ENCODE measurements at regions of chr19 and their contacts with region 1.

Region 1: DNA sequence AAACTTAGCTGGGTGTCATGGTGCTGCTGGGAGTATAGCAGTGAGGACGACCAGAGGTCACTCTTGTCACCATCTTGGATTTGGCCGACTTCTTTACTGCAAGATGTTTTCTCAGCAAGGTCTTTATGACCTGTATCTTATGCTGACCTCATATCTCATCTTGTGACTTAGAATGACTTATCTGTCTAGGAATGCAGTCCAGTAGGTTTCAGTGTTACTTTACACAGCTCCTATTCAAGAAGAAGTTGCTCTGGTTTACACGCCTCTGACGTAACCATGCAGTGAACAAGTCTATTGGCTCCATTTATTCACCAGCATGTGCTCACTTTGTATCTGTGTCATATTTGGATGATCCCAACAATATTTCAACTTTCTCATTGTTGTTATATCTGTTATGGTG is 26.7 kb downstream of the ZNF850 start:
- DNase-seq: no peak
- ATAC-seq: no peak
- H3K4me3 ChIP-seq: no peak overlapping the region
- H3K27ac ChIP-seq: no peak overlapping the region
- H3K4me1 ChIP-seq: no peaks in the 10 kb centered on the region
- H3K27me3 ChIP-seq: no peaks in the 10 kb centered on the region
- CTCF ChIP-seq: no peak

Region 2: GRCh38 chr19:36378625-36379509 is 367.0 kb before region 1 on chr19 and contains the start of gene ZFP14:
- intact Hi-C with region 1: no loop called
- DNase-seq: peak; percentile 93 to 94
- ATAC-seq: peak; percentile 98 to 100 (median 99)
- H3K4me3 ChIP-seq: peak within 1 kb of the TSS; percentile 54 to 86 (median 71)
- H3K27ac ChIP-seq: peak within 1 kb of the TSS; percentile 23 to 92 (median 82)
- H3K4me1 ChIP-seq: peaks cover 7 to 22% (median 11%) of the 10 kb centered on the region in 9 donors
- H3K27me3 ChIP-seq: no peaks in the 10 kb centered on the region
- CTCF ChIP-seq: peak in 6 of 9 donors; percentile 9 to 51 (median 36)
- total RNA-seq, gene ZFP14: 1.0 to 4.0 (median 2.5) TPM

Region 3: GRCh38 chr19:36638862-36639510 is 106.9 kb before region 1 on chr19:
- intact Hi-C with region 1: loop called in 2 of 10 experiments (anchors 10 kb)
- DNase-seq: no peak
- ATAC-seq: no peak
- H3K4me3 ChIP-seq: no peak overlapping the region
- H3K27ac ChIP-seq: no peak overlapping the region
- H3K4me1 ChIP-seq: no peaks in the 10 kb centered on the region
- H3K27me3 ChIP-seq: no peaks in the 10 kb centered on the region
- CTCF ChIP-seq: no peak

Region 4: DNA sequence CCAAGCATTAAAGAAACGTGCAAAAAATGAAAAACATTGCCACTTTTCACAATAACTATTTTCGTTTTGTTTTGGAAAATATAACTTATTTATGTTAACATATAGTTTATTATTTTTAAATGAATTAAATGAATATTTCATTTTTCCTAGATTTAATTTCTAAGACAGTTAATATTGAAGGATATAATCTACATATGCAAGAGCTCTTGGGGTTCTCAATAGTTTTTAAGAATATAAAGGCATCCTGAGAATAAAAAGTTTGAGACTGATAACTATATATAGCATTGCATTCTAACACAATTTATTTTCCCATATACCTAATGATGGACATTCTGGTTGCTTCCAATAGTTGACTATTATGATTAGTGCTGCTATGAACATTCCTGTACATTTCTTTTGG is 99.1 kb before region 1 on chr19:
- intact Hi-C with region 1: loop called in 1 of 10 experiments (anchors 10 kb)
- DNase-seq: no peak
- ATAC-seq: no peak
- H3K4me3 ChIP-seq: no peak overlapping the region
- H3K27ac ChIP-seq: no peak overlapping the region
- H3K4me1 ChIP-seq: no peaks in the 10 kb centered on the region
- H3K27me3 ChIP-seq: no peaks in the 10 kb centered on the region
- CTCF ChIP-seq: no peak

Region 5: GRCh38 chr19:36719687-36720556 is 25.9 kb before region 1 on chr19:
- intact Hi-C with region 1: no loop called
- DNase-seq: no peak
- ATAC-seq: no peak
- H3K4me3 ChIP-seq: no peak overlapping the region
- H3K27ac ChIP-seq: no peak overlapping the region
- H3K4me1 ChIP-seq: no peaks in the 10 kb centered on the region
- H3K27me3 ChIP-seq: no peaks in the 10 kb centered on the region
- CTCF ChIP-seq: no peak

Measured in heart right ventricle (tissue), 16 donors.